ENCODE measurements at regions of chr15 and their contacts with region 1.

Region 1: DNA sequence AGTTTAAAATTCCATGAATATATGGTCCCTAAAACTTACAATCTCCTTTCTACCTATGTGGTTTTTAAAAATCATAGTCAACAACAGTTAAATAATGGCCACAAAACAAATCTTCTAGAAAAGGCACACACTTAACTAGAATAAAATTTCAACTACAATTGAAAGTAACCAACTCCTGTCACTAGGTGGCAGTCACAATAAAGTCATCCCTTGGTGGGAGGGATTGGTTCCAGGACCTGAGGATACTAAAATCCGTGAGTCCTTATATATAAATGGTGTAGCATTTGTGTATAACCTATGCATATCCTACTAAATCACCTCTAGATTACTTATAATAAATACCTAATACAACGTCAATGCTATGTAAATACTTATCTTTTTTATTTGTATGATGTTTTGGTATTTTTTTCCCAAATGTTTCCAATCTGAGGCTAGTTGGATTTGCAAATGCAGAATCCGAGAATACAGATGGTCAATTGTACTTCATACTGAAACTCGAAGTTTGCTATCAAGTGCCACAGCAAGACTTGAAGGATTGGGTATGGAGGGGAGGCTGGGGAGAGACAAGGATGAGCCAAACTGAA is 172.6 kb downstream of the FMN1 start:
- DNase-seq: peak in 1 of 3 donors; percentile 69
- ATAC-seq: peak; percentile 84
- H3K4me3 ChIP-seq: no peak overlapping the region
- H3K4me1 ChIP-seq: peaks cover 4% of the 10 kb centered on the region
- CTCF ChIP-seq: peak; percentile 24

Region 2: DNA sequence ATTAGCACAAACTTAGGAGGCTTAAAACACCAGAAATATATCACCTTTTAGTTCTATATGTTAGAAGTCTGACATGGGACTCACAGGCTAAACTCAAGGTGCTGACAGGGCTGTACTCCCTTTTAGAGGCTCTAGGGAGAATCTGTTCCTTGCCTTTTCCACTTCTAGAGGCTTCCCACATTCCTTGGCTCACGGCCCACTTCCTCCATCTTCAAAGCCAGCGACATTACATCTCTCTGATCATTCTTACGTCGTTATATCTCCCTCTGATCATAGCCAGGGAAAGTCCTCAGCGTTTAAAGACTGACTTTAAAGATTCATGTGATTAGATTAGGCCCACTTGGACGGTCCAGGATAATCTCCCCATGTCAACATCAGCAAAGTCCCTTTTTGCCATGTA is 137.8 kb before region 1 on chr15:
- intact Hi-C with region 1: no loop called
- DNase-seq: peak in 1 of 3 donors; percentile 32
- ATAC-seq: no peak
- H3K4me3 ChIP-seq: no peak overlapping the region
- H3K4me1 ChIP-seq: no peaks in the 10 kb centered on the region
- CTCF ChIP-seq: no peak

Region 3: DNA sequence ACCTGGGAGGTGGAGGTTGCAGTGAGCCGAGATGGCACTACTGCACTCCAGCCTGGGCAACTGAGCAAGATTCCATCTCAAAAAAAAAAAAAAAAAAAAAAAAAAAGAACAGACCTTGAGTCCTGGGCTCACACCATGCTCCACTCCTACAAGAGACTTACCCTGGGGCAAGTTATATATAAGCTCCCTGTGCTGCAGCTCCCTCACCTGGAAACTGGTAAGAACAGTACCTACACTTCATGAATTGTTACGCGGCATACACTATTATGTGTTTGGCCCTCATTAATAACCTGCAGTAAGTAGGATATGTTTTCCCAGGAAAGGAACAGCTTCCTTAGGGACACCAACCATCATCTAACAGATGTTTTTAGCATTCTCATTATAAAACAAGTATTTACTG is 53.0 kb after region 1 on chr15:
- intact Hi-C with region 1: loop called in 1 of 2 experiments (anchors 2 kb)
- DNase-seq: peak in 1 of 3 donors; percentile 42
- ATAC-seq: peak; percentile 93
- H3K4me3 ChIP-seq: no peak overlapping the region
- H3K4me1 ChIP-seq: no peaks in the 10 kb centered on the region
- CTCF ChIP-seq: no peak